ENCODE measurements at regions of chr6 and their contacts with region 1.

Region 1: GRCh38 chr6:136859430-136859829 is 37.0 kb downstream of the PEX7 start:
- DNase-seq: no peak
- ATAC-seq: no peak
- H3K4me3 ChIP-seq: no peak overlapping the region
- H3K4me3 Mint-ChIP-seq: no peak overlapping the region
- H3K27ac ChIP-seq: no peak overlapping the region
- H3K27ac Mint-ChIP-seq: no peak overlapping the region
- H3K4me1 ChIP-seq: no peaks in the 10 kb centered on the region
- H3K4me1 Mint-ChIP-seq: no peaks in the 10 kb centered on the region
- H3K27me3 ChIP-seq: no peaks in the 10 kb centered on the region
- H3K27me3 Mint-ChIP-seq: no peaks in the 10 kb centered on the region

Region 2: GRCh38 chr6:136684466-136684865 is 175.0 kb before region 1 on chr6:
- CTCF ChIA-PET with region 1: no interaction called
- POLR2A ChIA-PET with region 1: interaction called in 1 of 2 experiments, 11 read pairs
- DNase-seq: no peak
- ATAC-seq: no peak
- H3K4me3 ChIP-seq: no peak overlapping the region
- H3K4me3 Mint-ChIP-seq: no peak overlapping the region
- H3K27ac ChIP-seq: no peak overlapping the region
- H3K27ac Mint-ChIP-seq: no peak overlapping the region
- H3K4me1 ChIP-seq: no peaks in the 10 kb centered on the region
- H3K4me1 Mint-ChIP-seq: peaks cover 5 to 19% (median 5%) of the 10 kb centered on the region in 3 donors
- H3K27me3 ChIP-seq: no peaks in the 10 kb centered on the region
- H3K27me3 Mint-ChIP-seq: no peaks in the 10 kb centered on the region

Region 3: DNA sequence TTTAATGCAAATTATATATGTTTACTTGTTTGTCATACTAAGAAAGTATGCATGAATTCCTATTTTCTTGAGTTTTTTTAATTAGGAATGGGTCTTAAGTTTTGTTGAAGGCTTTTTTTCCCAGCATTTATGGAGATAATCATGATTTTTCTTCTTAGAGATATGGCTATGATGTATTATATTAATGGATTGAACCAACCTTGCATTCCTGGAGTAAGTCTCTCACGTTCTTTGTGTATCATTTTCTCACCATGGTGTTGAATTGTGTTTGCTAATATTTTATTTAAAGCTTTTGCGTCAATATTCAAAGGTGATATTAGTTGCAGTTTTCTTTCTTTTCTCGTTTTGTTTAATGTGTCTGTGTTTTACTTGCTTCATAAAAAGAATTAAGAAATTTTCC is 14.3 kb after region 1 on chr6:
- CTCF ChIA-PET with region 1: no interaction called
- POLR2A ChIA-PET with region 1: no interaction called
- DNase-seq: peak in 1 of 35 experiments; percentile 3
- ATAC-seq: no peak
- H3K4me3 ChIP-seq: no peak overlapping the region
- H3K4me3 Mint-ChIP-seq: no peak overlapping the region
- H3K27ac ChIP-seq: no peak overlapping the region
- H3K27ac Mint-ChIP-seq: no peak overlapping the region
- H3K4me1 ChIP-seq: no peaks in the 10 kb centered on the region
- H3K4me1 Mint-ChIP-seq: peaks cover 0 to 10% (median 0%) of the 10 kb centered on the region in 3 donors
- H3K27me3 ChIP-seq: no peaks in the 10 kb centered on the region
- H3K27me3 Mint-ChIP-seq: no peaks in the 10 kb centered on the region

Measured in T-cell (primary cell).